ENCODE measurements at regions of chr5 and their contacts with region 1.

Region 1: GRCh38 chr5:138077065-138077696 is 6.7 kb upstream of the WNT8A start:
- DNase-seq: peak; percentile 76
- H3K4me3 ChIP-seq: no peak overlapping the region; a peak in 1 of 4 replicates
- H3K27ac ChIP-seq: no peak overlapping the region
- H3K4me1 ChIP-seq: no peaks in the 10 kb centered on the region
- H3K27me3 ChIP-seq: no peaks in the 10 kb centered on the region; the same call in 1 of the 2 replicates
- CTCF ChIP-seq: peak; percentile 90
- EP300 ChIP-seq: no peak
- RAD21 ChIP-seq: peak; percentile 90

Region 2: GRCh38 chr5:138065102-138065501 is 12.1 kb before region 1 on chr5:
- CTCF ChIA-PET with region 1: interaction called, 84 read pairs
- POLR2A ChIA-PET with region 1: no interaction called
- DNase-seq: no peak
- H3K4me3 ChIP-seq: no peak overlapping the region
- H3K27ac ChIP-seq: no peak overlapping the region
- H3K4me1 ChIP-seq: no peaks in the 10 kb centered on the region
- H3K27me3 ChIP-seq: no peaks in the 10 kb centered on the region
- CTCF ChIP-seq: peak; percentile 30
- EP300 ChIP-seq: no peak
- RAD21 ChIP-seq: no peak

Region 3: GRCh38 chr5:138102454-138103318 is 25.5 kb after region 1 on chr5:
- CTCF ChIA-PET with region 1: interaction called, 11 read pairs
- POLR2A ChIA-PET with region 1: no interaction called
- DNase-seq: no peak
- H3K4me3 ChIP-seq: no peak overlapping the region
- H3K27ac ChIP-seq: no peak overlapping the region
- H3K4me1 ChIP-seq: no peaks in the 10 kb centered on the region
- H3K27me3 ChIP-seq: peaks cover 9% of the 10 kb centered on the region; the same call in 1 of the 2 replicates
- CTCF ChIP-seq: no peak
- EP300 ChIP-seq: no peak
- RAD21 ChIP-seq: no peak

Region 4: GRCh38 chr5:138128334-138128733 is 51.2 kb after region 1 on chr5:
- CTCF ChIA-PET with region 1: interaction called, 91 read pairs
- POLR2A ChIA-PET with region 1: interaction called, 3 read pairs
- DNase-seq: no peak
- H3K4me3 ChIP-seq: no peak overlapping the region
- H3K27ac ChIP-seq: no peak overlapping the region
- H3K4me1 ChIP-seq: no peaks in the 10 kb centered on the region
- H3K27me3 ChIP-seq: no peaks in the 10 kb centered on the region
- CTCF ChIP-seq: no peak
- EP300 ChIP-seq: no peak
- RAD21 ChIP-seq: no peak

Region 5: DNA sequence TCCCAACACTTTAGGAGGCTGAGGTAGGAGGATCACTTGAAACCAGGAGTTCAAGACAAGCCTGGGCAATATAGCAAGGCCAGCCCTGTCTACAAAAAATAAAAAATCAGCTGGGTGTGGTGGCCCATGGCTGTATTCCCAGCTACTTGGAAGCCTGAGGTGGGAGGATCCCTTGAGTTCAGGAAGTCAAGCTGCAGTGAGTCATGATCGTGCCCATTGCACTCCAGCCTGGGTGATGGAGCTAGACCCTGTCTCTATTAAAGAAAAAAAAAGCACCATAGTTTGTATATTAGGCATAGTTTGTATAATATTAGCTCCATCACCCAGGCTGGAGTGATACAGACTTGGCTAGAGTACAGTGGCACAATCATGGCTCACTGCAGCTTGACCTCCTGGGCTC is 71.6 kb after region 1 on chr5:
- CTCF ChIA-PET with region 1: interaction called, 19 read pairs
- POLR2A ChIA-PET with region 1: no interaction called
- DNase-seq: no peak
- H3K4me3 ChIP-seq: no peak overlapping the region
- H3K27ac ChIP-seq: no peak overlapping the region; a peak in 1 of 4 replicates
- H3K4me1 ChIP-seq: no peaks in the 10 kb centered on the region
- H3K27me3 ChIP-seq: no peaks in the 10 kb centered on the region
- CTCF ChIP-seq: no peak
- EP300 ChIP-seq: no peak
- RAD21 ChIP-seq: no peak